ENCODE measurements at regions of chr3 and their contacts with region 1.

Region 1: GRCh38 chr3:14885292-14885691 is 62.1 kb upstream of the NR2C2 start:
- DNase-seq: no peak
- H3K4me3 ChIP-seq: no peak overlapping the region
- H3K27ac ChIP-seq: no peak overlapping the region
- H3K4me1 ChIP-seq: no peaks in the 10 kb centered on the region
- H3K27me3 ChIP-seq: no peaks in the 10 kb centered on the region
- CTCF ChIP-seq: no peak

Region 2: GRCh38 chr3:14508961-14509795 is 376.1 kb before region 1 on chr3:
- CTCF ChIA-PET with region 1: no interaction called
- dilution Hi-C with region 1: loop called (anchors 5 kb)
- in situ Hi-C with region 1: no loop called
- intact Hi-C with region 1: no loop called
- DNase-seq: no peak
- H3K4me3 ChIP-seq: peak overlapping the region in 1 of 3 experiments; percentile 11
- H3K27ac ChIP-seq: no peak overlapping the region
- H3K4me1 ChIP-seq: peaks cover 2% of the 10 kb centered on the region
- H3K27me3 ChIP-seq: no peaks in the 10 kb centered on the region
- CTCF ChIP-seq: peak; percentile 67 to 86

Region 3: GRCh38 chr3:14750650-14751049 is 134.6 kb before region 1 on chr3:
- CTCF ChIA-PET with region 1: no interaction called
- dilution Hi-C with region 1: loop called (anchors 5 kb)
- in situ Hi-C with region 1: no loop called
- intact Hi-C with region 1: no loop called
- DNase-seq: no peak
- H3K4me3 ChIP-seq: no peak overlapping the region
- H3K27ac ChIP-seq: no peak overlapping the region
- H3K4me1 ChIP-seq: no peaks in the 10 kb centered on the region
- H3K27me3 ChIP-seq: peaks cover 2% of the 10 kb centered on the region
- CTCF ChIP-seq: no peak

Region 4: GRCh38 chr3:14791343-14791945 is 93.8 kb before region 1 on chr3:
- CTCF ChIA-PET with region 1: no interaction called
- dilution Hi-C with region 1: loop called (anchors 5 kb)
- in situ Hi-C with region 1: no loop called
- intact Hi-C with region 1: no loop called
- DNase-seq: peak; percentile 26
- H3K4me3 ChIP-seq: no peak overlapping the region
- H3K27ac ChIP-seq: no peak overlapping the region
- H3K4me1 ChIP-seq: no peaks in the 10 kb centered on the region
- H3K27me3 ChIP-seq: peaks cover 4% of the 10 kb centered on the region
- CTCF ChIP-seq: peak; percentile 52 to 82

Region 5: GRCh38 chr3:14822670-14823390 is 62.5 kb before region 1 on chr3:
- CTCF ChIA-PET with region 1: no interaction called
- dilution Hi-C with region 1: loop called (anchors 10 kb)
- in situ Hi-C with region 1: no loop called
- intact Hi-C with region 1: no loop called
- DNase-seq: no peak
- H3K4me3 ChIP-seq: no peak overlapping the region
- H3K27ac ChIP-seq: no peak overlapping the region
- H3K4me1 ChIP-seq: no peaks in the 10 kb centered on the region
- H3K27me3 ChIP-seq: no peaks in the 10 kb centered on the region
- CTCF ChIP-seq: no peak

Region 6: DNA sequence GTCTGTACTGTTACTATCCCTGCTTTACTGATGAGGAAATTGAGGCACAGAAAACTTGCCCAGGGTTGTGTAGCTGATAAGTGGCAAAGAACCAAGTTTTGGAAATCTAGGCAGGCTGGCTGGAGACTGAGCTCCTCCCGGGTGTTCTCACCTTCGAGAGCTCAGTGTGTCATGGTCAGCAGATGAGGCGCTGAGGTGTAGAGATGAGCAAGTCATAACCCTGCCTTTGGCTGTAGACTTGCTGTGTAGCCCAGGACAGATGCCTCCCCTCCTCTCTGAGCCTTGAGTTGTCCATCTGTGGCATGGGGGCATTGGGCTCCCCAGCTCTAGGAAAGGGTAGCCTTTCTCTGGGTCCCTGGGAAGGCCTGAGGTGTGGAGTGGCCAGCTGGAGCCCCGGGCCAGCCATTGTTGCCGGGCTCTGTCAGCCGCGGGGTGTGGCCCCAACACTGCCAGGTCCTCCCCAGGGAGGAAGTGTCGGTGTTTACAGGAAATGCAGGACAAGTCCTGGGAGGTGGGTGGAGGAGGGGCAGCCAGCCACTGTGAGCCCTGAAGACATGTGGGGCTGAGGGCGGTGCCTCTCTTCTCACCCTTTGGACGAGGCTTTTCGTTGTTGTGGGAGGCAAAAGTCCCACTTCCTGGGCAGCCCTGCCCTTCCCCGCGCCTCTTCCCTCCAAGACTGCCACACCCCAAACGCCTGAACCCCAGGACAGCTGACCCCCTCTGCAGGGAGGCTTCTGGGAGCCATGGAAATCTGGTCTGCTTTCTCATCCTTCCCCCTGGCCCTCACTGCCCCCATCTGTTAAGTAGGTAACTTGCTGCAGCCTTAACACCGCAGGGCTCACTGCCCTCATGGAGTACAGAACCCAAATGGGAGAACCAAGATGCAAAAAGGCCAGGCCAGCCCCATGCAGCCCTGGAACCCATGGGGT is 37.4 kb before region 1 on chr3:
- CTCF ChIA-PET with region 1: no interaction called
- dilution Hi-C with region 1: loop called (anchors 5 kb)
- in situ Hi-C with region 1: no loop called
- intact Hi-C with region 1: no loop called
- DNase-seq: no peak
- H3K4me3 ChIP-seq: no peak overlapping the region
- H3K27ac ChIP-seq: no peak overlapping the region
- H3K4me1 ChIP-seq: no peaks in the 10 kb centered on the region
- H3K27me3 ChIP-seq: no peaks in the 10 kb centered on the region
- CTCF ChIP-seq: no peak

Region 7: GRCh38 chr3:15032650-15033049 is 147.4 kb after region 1 on chr3:
- CTCF ChIA-PET with region 1: no interaction called
- dilution Hi-C with region 1: no loop called
- in situ Hi-C with region 1: no loop called
- intact Hi-C with region 1: no loop called
- DNase-seq: no peak
- H3K4me3 ChIP-seq: no peak overlapping the region
- H3K27ac ChIP-seq: no peak overlapping the region
- H3K4me1 ChIP-seq: no peaks in the 10 kb centered on the region
- H3K27me3 ChIP-seq: no peaks in the 10 kb centered on the region
- CTCF ChIP-seq: no peak

Region 8: GRCh38 chr3:15256861-15257341 is 371.6 kb after region 1 on chr3:
- CTCF ChIA-PET with region 1: no interaction called
- dilution Hi-C with region 1: no loop called
- in situ Hi-C with region 1: no loop called
- intact Hi-C with region 1: no loop called
- DNase-seq: no peak
- H3K4me3 ChIP-seq: no peak overlapping the region
- H3K27ac ChIP-seq: no peak overlapping the region
- H3K4me1 ChIP-seq: peaks cover 14% of the 10 kb centered on the region
- H3K27me3 ChIP-seq: no peaks in the 10 kb centered on the region
- CTCF ChIP-seq: no peak